ENCODE measurements at regions of chr15 and their contacts with region 1.

Region 1: GRCh38 chr15:83653639-83654378 is at the start of gene ADAMTSL3:
- DNase-seq: peak; percentile 86 to 96
- ATAC-seq: peak; percentile 78
- H3K4me3 ChIP-seq: peak within 1 kb of the TSS; percentile 48 to 87
- H3K27ac ChIP-seq: peak within 1 kb of the TSS; percentile 17 to 92
- H3K4me1 ChIP-seq: peaks cover 3 to 5% of the 10 kb centered on the region in 2 donors
- H3K27me3 ChIP-seq: no peaks in the 10 kb centered on the region
- total RNA-seq, gene ADAMTSL3: 54.8 to 74.5 TPM

Region 2: GRCh38 chr15:83694015-83694414 is 40.2 kb after region 1 on chr15:
- intact Hi-C with region 1: loop called in 1 of 2 experiments (anchors 5 kb)
- DNase-seq: peak in 1 of 2 donors; percentile 54
- ATAC-seq: peak; percentile 33
- H3K4me3 ChIP-seq: peak overlapping the region in 1 of 2 donors; percentile 19
- H3K27ac ChIP-seq: peak overlapping the region; percentile 69 to 94
- H3K4me1 ChIP-seq: peaks cover 6 to 11% of the 10 kb centered on the region in 2 donors
- H3K27me3 ChIP-seq: no peaks in the 10 kb centered on the region

Region 3: GRCh38 chr15:83709246-83709645 is 55.4 kb after region 1 on chr15:
- intact Hi-C with region 1: loop called in 1 of 2 experiments (anchors 10 kb)
- DNase-seq: no peak
- ATAC-seq: no peak
- H3K4me3 ChIP-seq: no peak overlapping the region
- H3K27ac ChIP-seq: no peak overlapping the region
- H3K4me1 ChIP-seq: peaks cover 14 to 53% of the 10 kb centered on the region in 2 donors
- H3K27me3 ChIP-seq: no peaks in the 10 kb centered on the region

Region 4: DNA sequence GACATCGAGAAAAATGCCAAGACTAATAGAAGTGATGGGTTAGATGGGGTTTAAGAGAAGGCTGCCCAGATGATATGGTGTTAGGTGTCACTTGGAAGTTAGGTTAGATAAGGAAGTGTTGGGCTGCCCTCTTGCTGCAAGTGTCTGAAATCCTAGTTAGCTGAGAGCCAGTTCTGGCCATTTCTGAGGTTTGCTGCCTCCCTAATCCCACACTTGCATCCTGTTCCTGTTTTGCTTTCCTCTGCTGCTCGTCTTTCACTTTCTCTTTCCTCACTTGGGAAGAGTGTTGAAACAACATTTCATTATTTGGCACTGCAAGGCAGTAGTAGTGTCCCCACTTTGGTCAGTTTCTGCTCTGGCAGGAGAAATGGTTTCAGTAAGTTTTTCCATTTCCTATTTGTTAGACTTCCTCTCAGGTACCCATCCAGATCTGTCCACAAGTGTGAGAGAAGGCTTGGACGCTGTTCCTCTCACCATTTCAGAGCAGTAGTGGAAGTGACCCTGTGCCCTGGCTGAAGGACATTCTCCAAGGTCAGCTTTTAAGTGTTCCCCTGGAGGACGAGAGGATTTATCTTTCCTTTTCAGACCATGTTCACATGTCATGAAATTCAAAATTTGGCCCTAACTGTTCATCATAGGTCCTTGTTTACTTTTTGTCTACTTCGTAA is 93.4 kb after region 1 on chr15:
- intact Hi-C with region 1: loop called (anchors 5 to 10 kb)
- DNase-seq: no peak
- ATAC-seq: peak; percentile 91
- H3K4me3 ChIP-seq: peak overlapping the region in 1 of 2 donors; percentile 63
- H3K27ac ChIP-seq: peak overlapping the region; percentile 85 to 89
- H3K4me1 ChIP-seq: peaks cover 0 to 3% of the 10 kb centered on the region in 2 donors
- H3K27me3 ChIP-seq: no peaks in the 10 kb centered on the region

Region 5: DNA sequence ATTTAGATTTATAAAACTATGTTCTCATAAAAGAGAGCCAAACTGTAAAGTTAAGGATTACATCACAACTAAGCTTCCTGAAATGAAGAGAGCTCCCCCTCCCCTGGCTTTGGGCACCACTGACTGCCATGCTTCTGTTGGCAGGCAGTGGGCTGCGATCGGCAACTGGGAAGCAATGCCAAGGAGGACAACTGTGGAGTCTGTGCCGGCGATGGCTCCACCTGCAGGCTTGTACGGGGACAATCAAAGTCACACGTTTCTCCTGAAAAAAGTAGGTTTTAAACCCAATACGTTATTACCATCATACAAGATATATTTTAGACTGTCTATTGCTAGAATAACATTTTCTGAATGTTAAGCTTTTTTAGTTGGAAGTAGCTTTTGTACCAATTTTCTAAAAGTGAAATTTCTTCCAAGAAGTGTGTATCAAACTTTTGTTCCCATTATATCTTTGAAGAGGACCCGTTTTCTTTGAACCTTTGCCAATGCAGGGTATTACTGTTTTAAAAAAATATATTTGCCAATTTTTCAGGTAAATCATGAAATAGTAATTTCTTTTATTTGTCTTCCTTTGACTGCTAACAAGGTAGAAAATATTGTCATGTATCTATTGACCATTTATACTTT is 184.2 kb after region 1 on chr15:
- intact Hi-C with region 1: loop called in 1 of 2 experiments (anchors 5 kb)
- DNase-seq: peak; percentile 57 to 81
- ATAC-seq: no peak
- H3K4me3 ChIP-seq: no peak overlapping the region
- H3K27ac ChIP-seq: no peak overlapping the region
- H3K4me1 ChIP-seq: no peaks in the 10 kb centered on the region
- H3K27me3 ChIP-seq: no peaks in the 10 kb centered on the region

Measured in aorta (tissue), 5 donors.